PC-9 (cell line): ENCODE measurements at regions of chr6 and their contacts with region 1.

Region 1: DNA sequence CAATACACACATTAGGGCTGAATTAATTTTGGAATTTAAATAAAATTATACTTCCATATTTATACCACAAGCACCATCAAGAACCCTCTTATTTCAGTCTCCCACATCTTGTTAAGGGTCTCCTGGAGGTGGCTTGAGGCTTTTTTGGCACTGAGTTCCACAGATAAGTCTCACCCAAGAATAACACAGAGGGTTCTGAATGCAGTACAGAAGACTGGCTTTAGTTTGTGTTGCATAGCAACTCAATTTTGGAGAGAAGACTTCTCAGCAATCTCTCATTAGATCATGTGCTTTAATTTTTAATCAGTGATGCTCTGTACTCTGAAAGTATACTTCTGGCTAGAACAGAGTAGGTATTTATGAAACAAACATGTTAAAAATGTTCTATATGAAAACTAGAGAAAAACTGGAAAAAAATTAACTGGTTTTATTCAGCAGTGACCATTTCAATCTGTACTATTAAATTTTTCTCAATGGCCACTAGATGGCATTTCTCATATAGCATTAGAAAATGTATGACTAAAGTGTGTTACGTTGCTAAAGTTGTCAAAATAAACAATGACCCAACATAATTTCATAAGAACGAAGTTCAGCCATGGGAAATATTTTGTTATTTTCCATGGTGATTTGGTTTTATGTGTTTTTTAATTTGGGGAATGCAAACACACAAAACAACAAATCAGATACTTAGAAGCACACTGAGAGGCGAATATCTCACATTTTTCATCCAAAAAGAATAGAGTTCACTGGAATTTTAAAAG is 32.7 kb upstream of the MAP7 start:
- DNase-seq: peak in 1 of 2 experiments; percentile 96
- H3K4me3 ChIP-seq: no peak overlapping the region
- H3K27ac ChIP-seq: peak overlapping the region; percentile 66
- H3K4me1 ChIP-seq: peaks cover 25% of the 10 kb centered on the region
- H3K27me3 ChIP-seq: no peaks in the 10 kb centered on the region
- CTCF ChIP-seq: peak; percentile 92

Region 2: GRCh38 chr6:135851442-135852271 is 731.2 kb before region 1 on chr6 and contains the start of gene PDE7B:
- CTCF ChIA-PET with region 1: no interaction called
- POLR2A ChIA-PET with region 1: no interaction called
- intact Hi-C with region 1: no loop called
- DNase-seq: peak; percentile 70 to 74
- H3K4me3 ChIP-seq: peak within 1 kb of the TSS; percentile 6; the same call in 1 of the 2 replicates
- H3K27ac ChIP-seq: no peak within 1 kb of the TSS
- H3K4me1 ChIP-seq: peaks cover 13% of the 10 kb centered on the region; the same call in 1 of the 2 replicates
- H3K27me3 ChIP-seq: no peaks in the 10 kb centered on the region
- CTCF ChIP-seq: no peak
- total RNA-seq, gene PDE7B: 0.31 TPM in 1 of 2 replicates, not detected in the other

Region 3: DNA sequence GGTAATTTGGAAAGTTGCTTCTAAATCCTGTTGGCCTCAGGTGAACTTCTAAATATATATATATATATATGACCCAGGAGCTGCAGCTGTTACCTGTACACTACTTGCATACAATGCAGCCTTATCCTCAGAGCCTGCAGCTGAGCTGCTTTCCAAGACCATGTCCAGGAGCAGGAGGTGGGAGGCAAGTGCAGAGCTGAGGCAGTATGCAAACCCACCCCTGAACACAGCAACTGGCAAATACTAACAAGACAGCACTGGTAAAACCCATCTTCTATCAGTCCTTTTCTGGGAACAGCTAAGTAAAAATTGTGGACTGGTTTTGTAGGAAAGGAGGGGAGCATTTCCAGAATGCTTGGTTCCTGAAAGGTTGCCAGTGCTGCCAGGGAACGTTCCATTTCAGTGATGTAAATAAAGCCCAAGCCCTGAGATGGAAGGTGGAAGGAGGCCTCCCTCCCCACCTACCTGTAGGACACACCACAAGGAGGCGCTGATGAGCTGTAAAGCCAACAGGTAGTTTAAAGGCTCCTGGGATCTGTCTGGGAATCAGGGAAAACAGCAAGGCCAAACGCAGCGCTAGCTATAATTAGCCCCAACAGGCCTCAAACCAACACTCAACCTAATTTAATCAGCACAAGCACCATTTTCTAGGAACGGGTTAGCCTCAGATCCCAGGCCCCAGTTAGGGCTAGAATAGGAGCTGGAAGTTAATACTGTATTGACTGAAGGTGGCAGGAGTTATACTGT is 61.1 kb after region 1 on chr6:
- CTCF ChIA-PET with region 1: interaction called, 3 read pairs
- POLR2A ChIA-PET with region 1: no interaction called
- intact Hi-C with region 1: loop called (anchors 1 kb)
- DNase-seq: peak; percentile 85 to 90
- H3K4me3 ChIP-seq: no peak overlapping the region
- H3K27ac ChIP-seq: no peak overlapping the region
- H3K4me1 ChIP-seq: peaks cover 9% of the 10 kb centered on the region
- H3K27me3 ChIP-seq: no peaks in the 10 kb centered on the region
- CTCF ChIP-seq: peak; percentile 99